CD8-positive, alpha-beta T cell (primary cell): ENCODE measurements at regions of chr22 and their contacts with region 1.

Region 1: GRCh38 chr22:40679964-40680818 is 907 bp downstream of the MCHR1 start:
- DNase-seq: no peak
- ATAC-seq: no peak
- H3K4me3 ChIP-seq: no peak overlapping the region
- H3K4me3 Mint-ChIP-seq: no peak overlapping the region
- H3K27ac ChIP-seq: no peak overlapping the region
- H3K27ac Mint-ChIP-seq: no peak overlapping the region
- H3K4me1 ChIP-seq: peaks cover 11% of the 10 kb centered on the region
- H3K4me1 Mint-ChIP-seq: peaks cover 17% of the 10 kb centered on the region
- H3K27me3 ChIP-seq: no peaks in the 10 kb centered on the region
- H3K27me3 Mint-ChIP-seq: peaks cover 10% of the 10 kb centered on the region
- CTCF ChIP-seq: no peak

Region 2: GRCh38 chr22:40660730-40661129 is 19.5 kb before region 1 on chr22:
- CTCF ChIA-PET with region 1: no interaction called
- POLR2A ChIA-PET with region 1: no interaction called
- intact Hi-C with region 1: no loop called
- DNase-seq: no peak
- ATAC-seq: no peak
- H3K4me3 ChIP-seq: no peak overlapping the region
- H3K4me3 Mint-ChIP-seq: no peak overlapping the region
- H3K27ac ChIP-seq: no peak overlapping the region
- H3K27ac Mint-ChIP-seq: no peak overlapping the region
- H3K4me1 ChIP-seq: no peaks in the 10 kb centered on the region
- H3K4me1 Mint-ChIP-seq: no peaks in the 10 kb centered on the region
- H3K27me3 ChIP-seq: no peaks in the 10 kb centered on the region
- H3K27me3 Mint-ChIP-seq: peaks cover 2% of the 10 kb centered on the region
- CTCF ChIP-seq: no peak

Region 3: GRCh38 chr22:40694411-40694810 is 14.2 kb after region 1 on chr22:
- CTCF ChIA-PET with region 1: interaction called, 13 read pairs
- POLR2A ChIA-PET with region 1: no interaction called
- intact Hi-C with region 1: no loop called
- DNase-seq: no peak
- ATAC-seq: no peak
- H3K4me3 ChIP-seq: no peak overlapping the region
- H3K4me3 Mint-ChIP-seq: no peak overlapping the region
- H3K27ac ChIP-seq: no peak overlapping the region
- H3K27ac Mint-ChIP-seq: no peak overlapping the region
- H3K4me1 ChIP-seq: no peaks in the 10 kb centered on the region
- H3K4me1 Mint-ChIP-seq: no peaks in the 10 kb centered on the region
- H3K27me3 ChIP-seq: no peaks in the 10 kb centered on the region
- H3K27me3 Mint-ChIP-seq: no peaks in the 10 kb centered on the region
- CTCF ChIP-seq: no peak

Region 4: DNA sequence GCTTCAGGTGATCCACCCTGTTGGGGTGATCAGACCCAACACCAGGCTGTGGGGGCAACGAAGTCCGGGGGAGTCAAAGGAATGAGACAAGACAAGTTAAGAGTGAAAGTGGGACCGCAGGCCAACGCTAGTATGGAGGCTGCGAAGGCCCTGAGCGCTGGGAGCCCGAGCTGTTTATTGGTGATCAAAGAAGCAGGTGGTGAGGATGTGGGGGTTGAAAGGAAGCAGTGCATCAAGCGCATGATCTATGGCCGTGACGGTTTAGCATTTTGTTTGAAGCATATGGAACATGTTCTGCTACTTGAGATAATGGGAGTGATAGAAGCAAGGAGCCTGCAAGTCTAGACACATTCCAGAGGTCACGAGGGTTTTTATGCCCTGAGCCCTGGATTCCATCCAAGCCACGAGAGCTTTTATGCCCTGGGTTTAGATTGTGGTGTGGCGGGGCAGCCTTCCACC is 48.6 kb after region 1 on chr22:
- CTCF ChIA-PET with region 1: interaction called, 8 read pairs
- POLR2A ChIA-PET with region 1: no interaction called
- intact Hi-C with region 1: loop called in 1 of 2 experiments (anchors 1 kb)
- DNase-seq: peak; percentile 44 to 84 (median 62)
- ATAC-seq: peak; percentile 58
- H3K4me3 ChIP-seq: no peak overlapping the region
- H3K4me3 Mint-ChIP-seq: peak overlapping the region; percentile 62
- H3K27ac ChIP-seq: peak overlapping the region; percentile 59 to 67
- H3K27ac Mint-ChIP-seq: peak overlapping the region; percentile 98
- H3K4me1 ChIP-seq: peaks cover 62% of the 10 kb centered on the region
- H3K4me1 Mint-ChIP-seq: peaks cover 51% of the 10 kb centered on the region
- H3K27me3 ChIP-seq: no peaks in the 10 kb centered on the region
- H3K27me3 Mint-ChIP-seq: no peaks in the 10 kb centered on the region
- CTCF ChIP-seq: no peak

Region 5: DNA sequence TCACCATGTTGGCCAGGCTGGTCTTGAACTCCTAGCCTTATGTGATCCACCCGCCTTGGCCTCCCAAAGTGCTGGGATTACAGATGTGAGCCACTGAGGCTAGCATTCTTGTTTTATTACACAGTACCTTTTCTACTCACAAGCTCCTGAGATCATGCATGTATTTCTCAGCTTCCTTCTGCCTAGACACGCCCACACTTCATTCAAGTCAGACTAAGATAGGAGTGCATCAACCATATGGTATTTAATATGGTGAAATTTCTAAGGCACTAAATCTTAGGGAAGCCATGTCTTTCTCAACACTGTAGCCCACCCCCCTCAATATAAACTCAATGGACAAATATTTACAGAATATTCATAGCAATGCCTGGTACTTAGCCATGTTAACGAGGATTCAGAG is 76.9 kb after region 1 on chr22:
- CTCF ChIA-PET with region 1: interaction called, 159 read pairs
- POLR2A ChIA-PET with region 1: interaction called, 7 read pairs
- intact Hi-C with region 1: loop called in 1 of 2 experiments (anchors 1 kb)
- DNase-seq: no peak
- ATAC-seq: no peak
- H3K4me3 ChIP-seq: no peak overlapping the region
- H3K4me3 Mint-ChIP-seq: no peak overlapping the region
- H3K27ac ChIP-seq: no peak overlapping the region
- H3K27ac Mint-ChIP-seq: no peak overlapping the region
- H3K4me1 ChIP-seq: no peaks in the 10 kb centered on the region
- H3K4me1 Mint-ChIP-seq: no peaks in the 10 kb centered on the region
- H3K27me3 ChIP-seq: no peaks in the 10 kb centered on the region
- H3K27me3 Mint-ChIP-seq: no peaks in the 10 kb centered on the region
- CTCF ChIP-seq: no peak

Region 6: DNA sequence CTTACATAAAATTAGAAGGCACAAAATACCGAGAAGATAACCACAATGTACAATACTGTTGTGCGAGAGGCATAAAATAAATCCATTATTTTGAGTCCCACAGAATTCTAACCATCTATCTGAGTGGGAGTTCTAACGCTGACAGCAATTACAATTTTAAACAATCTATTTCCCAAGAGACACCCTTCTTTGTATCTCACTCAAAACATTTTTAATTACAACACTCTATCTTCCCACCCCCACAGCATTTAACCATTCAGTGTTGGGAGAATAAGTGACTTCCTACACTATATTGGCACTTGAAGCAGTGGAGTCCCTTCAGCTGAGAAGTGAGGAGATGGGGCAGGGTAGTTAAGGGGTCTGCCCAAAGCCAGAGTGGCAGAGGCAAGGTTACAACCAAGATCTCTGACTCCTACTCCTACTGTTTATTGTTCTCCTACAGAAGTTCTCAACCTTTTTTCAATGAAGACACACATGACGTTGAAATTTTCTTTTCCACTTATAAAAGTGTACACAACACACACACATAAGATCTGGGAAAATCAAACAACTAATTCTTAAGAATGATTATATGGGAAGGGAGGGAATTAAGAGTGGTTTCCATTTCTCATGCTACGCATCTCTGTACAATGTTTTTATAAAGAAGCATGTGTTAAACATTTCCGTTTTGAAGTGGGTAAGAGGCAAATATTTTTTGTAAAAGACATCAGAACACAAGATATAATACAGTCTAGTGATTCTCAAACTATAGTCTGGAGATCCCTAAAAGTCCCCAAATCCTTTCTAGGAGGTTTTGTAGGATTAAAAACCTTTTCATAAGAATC is 128.0 kb after region 1 on chr22:
- CTCF ChIA-PET with region 1: interaction called, 11 read pairs
- POLR2A ChIA-PET with region 1: no interaction called
- intact Hi-C with region 1: no loop called
- DNase-seq: no peak
- ATAC-seq: no peak
- H3K4me3 ChIP-seq: no peak overlapping the region
- H3K4me3 Mint-ChIP-seq: no peak overlapping the region
- H3K27ac ChIP-seq: no peak overlapping the region
- H3K27ac Mint-ChIP-seq: no peak overlapping the region
- H3K4me1 ChIP-seq: no peaks in the 10 kb centered on the region
- H3K4me1 Mint-ChIP-seq: peaks cover 17% of the 10 kb centered on the region
- H3K27me3 ChIP-seq: no peaks in the 10 kb centered on the region
- H3K27me3 Mint-ChIP-seq: no peaks in the 10 kb centered on the region
- CTCF ChIP-seq: no peak

Region 7: GRCh38 chr22:40898850-40899357 is 218.7 kb after region 1 on chr22:
- CTCF ChIA-PET with region 1: interaction called, 26 read pairs
- POLR2A ChIA-PET with region 1: no interaction called
- intact Hi-C with region 1: loop called (anchors 1 kb)
- DNase-seq: peak in 2 of 9 experiments; percentile 54 to 67
- ATAC-seq: peak; percentile 38
- H3K4me3 ChIP-seq: no peak overlapping the region
- H3K4me3 Mint-ChIP-seq: no peak overlapping the region
- H3K27ac ChIP-seq: no peak overlapping the region
- H3K27ac Mint-ChIP-seq: no peak overlapping the region
- H3K4me1 ChIP-seq: no peaks in the 10 kb centered on the region
- H3K4me1 Mint-ChIP-seq: peaks cover 5% of the 10 kb centered on the region
- H3K27me3 ChIP-seq: no peaks in the 10 kb centered on the region
- H3K27me3 Mint-ChIP-seq: no peaks in the 10 kb centered on the region
- CTCF ChIP-seq: peak; percentile 40